ENCODE measurements at regions of chr15 and their contacts with region 1.

Region 1: GRCh38 chr15:70488002-70488605 is 275.3 kb downstream of the UACA start:
- DNase-seq: peak; percentile 84
- H3K4me3 Mint-ChIP-seq: no peak overlapping the region
- H3K27ac Mint-ChIP-seq: no peak overlapping the region
- H3K4me1 Mint-ChIP-seq: peaks cover 42% of the 10 kb centered on the region
- H3K27me3 Mint-ChIP-seq: peaks cover 2% of the 10 kb centered on the region

Region 2: GRCh38 chr15:69713726-69714559 is 774.2 kb before region 1 on chr15:
- CTCF ChIA-PET with region 1: no interaction called
- intact Hi-C with region 1: loop called (anchors 2 kb)
- DNase-seq: peak; percentile 90
- H3K4me3 Mint-ChIP-seq: no peak overlapping the region
- H3K27ac Mint-ChIP-seq: peak overlapping the region; percentile 73
- H3K4me1 Mint-ChIP-seq: peaks cover 55% of the 10 kb centered on the region
- H3K27me3 Mint-ChIP-seq: no peaks in the 10 kb centered on the region

Region 3: DNA sequence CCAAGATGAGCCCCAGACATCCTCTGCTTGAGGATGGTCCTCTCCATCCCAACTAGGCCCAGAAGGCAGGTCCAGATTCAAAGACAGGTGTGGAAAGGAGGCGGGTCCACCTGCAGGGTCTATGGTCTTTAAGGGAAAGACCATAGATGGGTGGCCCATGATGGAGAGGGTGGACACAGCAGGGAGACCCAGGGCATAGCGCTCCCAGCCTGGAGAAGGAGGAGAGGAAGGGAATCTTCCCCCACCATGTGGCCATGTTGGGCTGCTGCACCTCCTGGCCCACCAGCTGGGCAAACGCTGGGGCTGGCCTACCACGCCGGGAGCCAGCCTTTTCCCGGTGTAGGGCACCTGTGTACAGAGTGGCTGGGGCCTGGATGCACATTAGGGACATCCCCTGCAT is 125.2 kb before region 1 on chr15:
- CTCF ChIA-PET with region 1: no interaction called
- intact Hi-C with region 1: loop called (anchors 10 kb)
- DNase-seq: no peak
- H3K4me3 Mint-ChIP-seq: no peak overlapping the region
- H3K27ac Mint-ChIP-seq: no peak overlapping the region
- H3K4me1 Mint-ChIP-seq: peaks cover 6% of the 10 kb centered on the region
- H3K27me3 Mint-ChIP-seq: peaks cover 5% of the 10 kb centered on the region

Region 4: GRCh38 chr15:70512772-70513362 is 24.8 kb after region 1 on chr15:
- CTCF ChIA-PET with region 1: interaction called, 120 read pairs
- intact Hi-C with region 1: loop called (anchors 1 kb)
- DNase-seq: peak; percentile 88
- H3K4me3 Mint-ChIP-seq: no peak overlapping the region
- H3K27ac Mint-ChIP-seq: no peak overlapping the region
- H3K4me1 Mint-ChIP-seq: peaks cover 24% of the 10 kb centered on the region
- H3K27me3 Mint-ChIP-seq: no peaks in the 10 kb centered on the region

Region 5: GRCh38 chr15:70545526-70545925 is 57.4 kb after region 1 on chr15:
- CTCF ChIA-PET with region 1: interaction called, 4 read pairs
- intact Hi-C with region 1: loop called (anchors 1 kb)
- DNase-seq: no peak
- H3K4me3 Mint-ChIP-seq: no peak overlapping the region
- H3K27ac Mint-ChIP-seq: peak overlapping the region; percentile 91
- H3K4me1 Mint-ChIP-seq: peaks cover 60% of the 10 kb centered on the region
- H3K27me3 Mint-ChIP-seq: no peaks in the 10 kb centered on the region

Measured in activated naive CD4-positive, alpha-beta T cell treated with anti-CD3 and anti-CD28 coated beads for 36 hours (primary cell).